ENCODE measurements at regions of chr17 and their contacts with region 1.

Region 1: DNA sequence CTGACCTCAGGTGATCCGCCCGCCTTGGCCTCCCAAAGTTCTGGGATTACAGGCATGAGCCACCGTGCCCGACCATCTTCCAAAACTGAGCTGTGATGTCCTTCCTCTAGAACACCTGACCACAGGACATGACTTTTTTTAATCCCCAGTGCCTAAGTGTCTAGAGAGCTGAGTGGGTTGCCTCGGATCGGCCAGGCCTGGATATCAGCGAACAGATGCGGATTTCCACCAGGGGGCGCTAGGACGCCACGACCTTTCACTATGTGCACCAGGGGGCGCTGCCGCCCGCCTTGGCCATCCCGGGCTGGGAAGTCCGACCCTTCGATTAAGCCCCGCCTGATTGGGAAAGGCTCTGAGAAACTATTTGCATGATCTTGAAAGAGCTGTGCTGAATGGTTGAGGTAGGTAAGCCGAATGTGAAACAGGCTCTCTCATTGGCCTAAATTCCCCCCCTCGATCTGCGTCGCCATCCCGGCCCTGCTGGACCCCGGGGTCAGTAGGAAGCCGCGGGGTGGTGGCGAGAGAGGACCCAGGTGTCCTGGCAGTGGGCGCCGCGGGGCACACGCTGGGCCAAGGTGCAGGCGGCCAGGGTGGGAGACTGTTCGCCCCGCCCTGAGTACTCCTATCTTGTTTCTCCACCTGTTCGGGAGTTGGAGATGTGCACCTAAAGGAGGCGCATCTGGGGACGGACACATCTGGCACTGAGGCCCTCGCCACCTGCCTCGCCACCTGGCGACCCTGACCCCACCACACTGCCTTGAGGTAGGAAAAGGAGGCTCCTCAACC is at the start of gene ACBD4:
- DNase-seq: peak; percentile 98
- H3K4me3 ChIP-seq: peak within 1 kb of the TSS; percentile 3 to 69 (median 53)
- H3K27ac ChIP-seq: peak within 1 kb of the TSS; percentile 14
- H3K4me1 ChIP-seq: peaks cover 17% of the 10 kb centered on the region
- H3K27me3 ChIP-seq: no peaks in the 10 kb centered on the region
- CTCF ChIP-seq: peak; percentile 100
- POLR2A ChIP-seq: peak; percentile 50
- total RNA-seq, gene ACBD4: 6.7 and 7.5 TPM in 2 replicates

Region 2: DNA sequence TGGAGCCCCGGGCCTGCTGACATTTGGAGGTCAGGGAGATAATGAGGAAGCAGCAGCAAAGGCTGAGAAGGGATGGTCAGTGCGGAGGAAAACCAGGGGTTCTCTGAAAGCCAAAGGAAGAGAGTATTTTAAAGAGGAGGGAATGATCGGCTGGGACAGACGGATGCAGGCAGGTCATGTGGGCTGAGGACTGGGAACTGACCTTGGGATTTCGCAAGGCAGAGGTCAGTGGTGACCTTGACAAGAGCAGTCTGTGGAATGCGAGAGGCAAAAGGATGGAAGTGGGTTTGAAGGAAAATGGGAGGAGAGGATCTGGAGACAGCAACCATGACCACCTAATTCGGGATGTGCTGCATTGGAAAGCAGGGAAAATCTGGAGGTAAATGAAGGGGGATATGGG is 246.4 kb before region 1 on chr17:
- CTCF ChIA-PET with region 1: no interaction called
- POLR2A ChIA-PET with region 1: no interaction called
- dilution Hi-C with region 1: no loop called
- intact Hi-C with region 1: no loop called
- DNase-seq: no peak
- H3K4me3 ChIP-seq: no peak overlapping the region
- H3K27ac ChIP-seq: no peak overlapping the region
- H3K4me1 ChIP-seq: no peaks in the 10 kb centered on the region
- H3K27me3 ChIP-seq: no peaks in the 10 kb centered on the region
- CTCF ChIP-seq: no peak
- POLR2A ChIP-seq: no peak

Region 3: DNA sequence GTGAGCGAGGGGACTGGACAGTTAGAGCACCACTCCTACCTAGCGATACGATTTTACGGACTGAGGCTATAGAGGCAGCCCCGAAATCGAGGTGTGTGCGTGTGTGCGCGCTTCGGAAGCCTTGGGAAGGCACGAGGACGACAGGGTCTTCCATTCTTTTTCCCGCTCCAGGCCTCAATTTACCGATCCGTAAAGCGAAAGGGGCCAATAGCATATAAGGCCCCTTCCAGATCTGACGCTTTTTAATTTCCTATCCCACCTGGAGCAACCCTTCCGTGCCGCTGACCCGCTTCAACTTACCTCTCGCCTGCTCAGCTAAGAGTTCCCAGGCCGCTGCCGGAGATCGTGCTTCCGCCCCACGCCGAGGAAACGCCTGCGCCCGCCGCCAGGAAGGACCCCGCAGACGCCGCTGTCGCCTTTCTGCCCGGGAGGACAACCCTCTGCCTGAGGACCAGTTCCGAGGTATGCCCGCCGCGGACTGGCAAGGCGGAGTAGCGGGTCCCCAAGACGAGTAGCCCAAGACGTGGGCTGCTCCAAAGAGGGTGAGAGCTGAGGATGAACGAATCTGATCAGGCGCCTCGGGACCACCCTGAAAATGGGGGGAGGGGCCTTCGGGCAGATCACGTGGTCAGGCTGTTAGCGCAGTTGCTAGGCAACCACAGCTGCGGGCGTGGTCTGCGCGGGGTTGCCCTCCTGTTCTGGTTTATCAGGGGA is 236.2 kb before region 1 on chr17 and contains the start of gene EFTUD2:
- CTCF ChIA-PET with region 1: interaction called, 8 read pairs
- POLR2A ChIA-PET with region 1: no interaction called
- dilution Hi-C with region 1: no loop called
- intact Hi-C with region 1: loop called (anchors 2 kb)
- DNase-seq: peak; percentile 93
- H3K4me3 ChIP-seq: peak within 1 kb of the TSS; percentile 67 to 97 (median 73)
- H3K27ac ChIP-seq: peak within 1 kb of the TSS; percentile 96
- H3K4me1 ChIP-seq: peaks cover 37% of the 10 kb centered on the region
- H3K27me3 ChIP-seq: no peaks in the 10 kb centered on the region
- CTCF ChIP-seq: no peak
- POLR2A ChIP-seq: peak; percentile 87
- total RNA-seq, gene EFTUD2: 170 and 171 TPM in 2 replicates

Region 4: DNA sequence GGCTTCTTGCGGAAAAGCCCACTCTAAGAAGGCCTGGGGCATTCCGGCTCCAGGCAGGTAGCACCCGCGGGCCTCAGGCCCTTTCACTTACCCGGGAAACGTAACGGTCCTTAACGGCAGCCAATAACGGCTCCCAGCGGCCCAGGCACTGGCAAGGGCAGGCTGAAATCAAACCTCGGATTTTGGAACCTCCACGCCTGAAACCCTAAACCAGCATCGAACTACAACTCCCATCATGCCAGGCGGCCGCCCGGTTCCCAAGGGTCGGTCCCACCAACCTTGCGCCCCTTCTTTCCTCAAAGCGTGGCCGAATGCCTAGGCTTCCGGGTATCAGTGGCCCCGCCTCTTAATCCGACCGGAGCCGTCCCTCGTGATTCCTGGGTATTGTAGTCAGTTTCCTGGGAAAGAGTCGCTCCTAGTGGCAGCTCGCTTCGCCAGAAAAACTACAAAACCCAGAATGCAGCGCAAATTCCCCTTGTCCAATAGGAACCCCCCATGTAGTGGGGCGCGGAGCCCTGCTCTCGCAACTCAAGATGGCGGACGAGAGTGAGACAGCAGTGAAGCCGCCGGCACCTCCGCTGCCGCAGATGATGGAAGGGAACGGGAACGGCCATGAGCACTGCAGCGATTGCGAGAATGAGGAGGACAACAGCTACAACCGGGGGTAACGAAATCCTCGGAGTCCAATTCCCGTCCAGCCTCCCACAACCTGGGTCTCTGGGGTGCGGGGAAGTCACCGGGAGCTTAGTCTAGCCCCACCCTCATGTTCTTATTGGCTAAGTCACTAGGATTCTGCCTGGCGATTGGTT is 74.4 kb before region 1 on chr17 and contains the start of gene NMT1:
- CTCF ChIA-PET with region 1: interaction called, 11 read pairs
- POLR2A ChIA-PET with region 1: no interaction called
- dilution Hi-C with region 1: no loop called
- intact Hi-C with region 1: loop called (anchors 2 kb)
- DNase-seq: peak; percentile 100
- H3K4me3 ChIP-seq: peak within 1 kb of the TSS; percentile 58 to 96 (median 95)
- H3K27ac ChIP-seq: peak within 1 kb of the TSS; percentile 90
- H3K4me1 ChIP-seq: peaks cover 21% of the 10 kb centered on the region
- H3K27me3 ChIP-seq: no peaks in the 10 kb centered on the region
- CTCF ChIP-seq: no peak
- POLR2A ChIP-seq: peak; percentile 89
- total RNA-seq, gene NMT1: 126 and 135 TPM in 2 replicates

Region 5: DNA sequence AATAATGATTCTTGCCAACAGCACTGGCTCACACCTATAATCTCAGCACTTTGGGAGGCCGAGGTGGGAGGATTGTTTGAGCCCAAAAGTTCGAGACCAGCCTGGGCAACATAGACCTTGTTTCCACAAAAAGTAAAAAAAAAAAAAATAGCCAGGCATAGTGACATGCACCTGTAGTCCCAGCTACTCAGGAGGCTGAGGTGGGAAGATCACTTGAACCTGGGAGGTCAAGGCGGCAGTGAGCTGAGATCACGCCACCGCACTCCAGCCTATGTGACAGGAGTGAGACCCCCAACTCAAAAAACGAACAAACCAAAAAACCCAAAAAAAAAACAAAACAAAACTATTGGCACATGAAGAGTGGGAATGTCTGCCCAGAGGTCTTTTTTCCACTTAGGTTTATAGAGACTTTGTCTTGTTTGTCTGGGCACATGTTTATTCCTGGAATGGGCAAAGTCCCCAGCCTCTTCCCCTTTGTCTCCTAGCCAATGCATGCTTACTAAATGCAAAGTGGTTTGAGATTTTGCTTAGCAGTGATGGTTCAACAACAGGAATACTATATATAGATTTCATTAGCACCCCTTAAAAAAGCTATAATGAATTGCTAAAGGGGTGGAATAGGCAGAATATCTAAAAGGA is 48.4 kb before region 1 on chr17:
- CTCF ChIA-PET with region 1: no interaction called
- POLR2A ChIA-PET with region 1: no interaction called
- dilution Hi-C with region 1: no loop called
- intact Hi-C with region 1: no loop called
- DNase-seq: no peak
- H3K4me3 ChIP-seq: no peak overlapping the region
- H3K27ac ChIP-seq: no peak overlapping the region
- H3K4me1 ChIP-seq: peaks cover 4% of the 10 kb centered on the region
- H3K27me3 ChIP-seq: no peaks in the 10 kb centered on the region
- CTCF ChIP-seq: no peak
- POLR2A ChIP-seq: no peak

Region 6: DNA sequence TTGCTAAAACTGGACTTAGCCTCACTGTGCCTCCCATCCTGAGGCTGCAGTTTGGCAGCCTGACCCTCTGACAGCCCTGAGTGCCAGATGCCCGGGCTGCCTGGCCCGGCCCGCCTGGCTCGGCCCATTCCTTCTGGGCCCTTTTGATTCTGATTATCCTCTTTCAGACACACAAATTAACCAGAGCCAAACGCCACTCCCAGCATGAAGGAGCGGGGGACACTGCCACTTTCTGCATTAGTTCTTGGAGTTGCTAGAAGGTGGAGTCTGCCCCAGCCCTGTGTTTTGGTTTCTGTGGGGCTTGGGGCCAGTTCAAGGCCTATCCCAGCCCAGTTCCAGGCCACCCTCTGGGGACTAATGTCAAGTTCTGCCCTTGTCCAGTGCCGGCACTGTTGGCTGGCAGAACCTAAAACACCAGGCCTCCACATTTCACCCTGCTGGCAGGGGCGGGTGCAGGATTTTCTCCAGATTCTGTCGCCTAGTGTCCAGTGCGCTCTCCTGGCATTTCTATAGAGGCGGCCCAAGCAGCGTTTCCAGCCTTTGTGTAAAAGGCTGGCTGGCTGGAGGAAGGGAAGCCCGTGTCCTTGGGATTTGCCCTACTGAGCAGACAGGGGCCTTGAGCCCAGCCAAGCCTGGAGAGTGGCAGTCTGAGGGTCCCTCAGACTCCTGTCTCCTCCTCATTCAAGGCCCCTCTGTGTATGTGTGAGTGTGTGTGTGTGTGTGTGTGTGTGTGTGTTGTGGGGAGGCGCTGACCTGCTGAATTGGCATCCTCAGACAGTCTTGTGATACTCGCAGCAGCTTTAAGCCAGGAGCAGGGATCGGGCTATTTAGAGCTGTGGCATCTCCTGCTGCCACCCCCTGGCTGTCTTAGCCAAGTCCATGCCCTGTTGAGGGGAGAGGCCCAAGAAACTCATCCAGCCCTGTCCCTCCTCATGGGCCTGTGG is 24.4 kb before region 1 on chr17:
- CTCF ChIA-PET with region 1: interaction called, 61 read pairs
- POLR2A ChIA-PET with region 1: no interaction called
- dilution Hi-C with region 1: no loop called
- intact Hi-C with region 1: loop called (anchors 1 kb)
- DNase-seq: no peak
- H3K4me3 ChIP-seq: no peak overlapping the region
- H3K27ac ChIP-seq: no peak overlapping the region
- H3K4me1 ChIP-seq: no peaks in the 10 kb centered on the region
- H3K27me3 ChIP-seq: no peaks in the 10 kb centered on the region
- CTCF ChIP-seq: no peak
- POLR2A ChIP-seq: no peak

Region 7: GRCh38 chr17:45161019-45161825 is 25.8 kb after region 1 on chr17:
- CTCF ChIA-PET with region 1: interaction called, 52 read pairs
- POLR2A ChIA-PET with region 1: interaction called, 6 read pairs
- dilution Hi-C with region 1: no loop called
- intact Hi-C with region 1: loop called (anchors 1 kb)
- DNase-seq: peak; percentile 100
- H3K4me3 ChIP-seq: peak overlapping the region; percentile 60 to 92 (median 80)
- H3K27ac ChIP-seq: peak overlapping the region; percentile 91
- H3K4me1 ChIP-seq: peaks cover 28% of the 10 kb centered on the region
- H3K27me3 ChIP-seq: no peaks in the 10 kb centered on the region
- CTCF ChIP-seq: no peak
- POLR2A ChIP-seq: peak; percentile 94

Region 8: DNA sequence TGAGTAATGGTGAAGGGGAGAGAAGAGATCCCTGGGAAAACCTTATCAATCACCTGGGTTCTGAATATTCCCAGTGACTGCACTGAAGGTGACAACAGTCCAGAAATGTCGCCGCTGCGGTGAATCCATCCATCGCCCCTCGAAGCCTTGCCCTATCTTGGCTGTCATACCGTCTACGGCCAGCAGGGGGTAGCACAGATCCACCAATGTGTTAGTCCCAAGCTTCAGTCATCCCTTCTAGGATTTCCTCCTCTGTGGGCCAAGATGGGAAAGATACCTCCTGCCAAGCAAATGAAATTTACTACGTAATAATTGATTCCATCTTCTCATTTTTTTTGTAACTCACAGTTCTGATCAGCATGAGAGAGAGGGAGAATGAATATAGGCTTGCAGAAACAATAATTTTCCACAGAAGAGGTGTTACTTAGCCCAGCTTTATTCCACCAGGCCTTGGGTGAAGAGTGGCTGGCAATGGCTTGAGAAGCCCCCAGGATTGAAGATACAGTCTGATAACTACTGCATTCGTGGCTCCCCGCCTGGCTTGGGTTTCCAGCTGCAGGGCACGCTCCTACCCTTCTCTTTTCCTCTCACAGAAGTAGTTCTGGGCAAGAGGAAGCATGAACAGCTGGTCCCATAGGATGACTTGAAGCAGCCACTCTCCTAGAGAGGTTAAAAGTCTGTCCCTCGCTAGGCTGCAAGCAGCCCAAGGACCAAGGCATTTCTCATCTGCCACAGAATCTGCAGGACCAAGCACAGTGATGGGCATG is 83.7 kb after region 1 on chr17:
- CTCF ChIA-PET with region 1: interaction called, 63 read pairs
- POLR2A ChIA-PET with region 1: no interaction called
- dilution Hi-C with region 1: no loop called
- intact Hi-C with region 1: no loop called
- DNase-seq: peak; percentile 74
- H3K4me3 ChIP-seq: no peak overlapping the region
- H3K27ac ChIP-seq: no peak overlapping the region
- H3K4me1 ChIP-seq: no peaks in the 10 kb centered on the region
- H3K27me3 ChIP-seq: peaks cover 9 to 21% of the 10 kb centered on the region in 2 experiments
- CTCF ChIP-seq: peak; percentile 86 to 92
- POLR2A ChIP-seq: no peak

Measured in endothelial cell of umbilical vein (primary cell).